Activated CD4-positive, alpha-beta memory T cell treated with anti-CD3 and anti-CD28 coated beads for 36 hours (primary cell): ENCODE measurements at regions of chr10 and their contacts with region 1.

Region 1: DNA sequence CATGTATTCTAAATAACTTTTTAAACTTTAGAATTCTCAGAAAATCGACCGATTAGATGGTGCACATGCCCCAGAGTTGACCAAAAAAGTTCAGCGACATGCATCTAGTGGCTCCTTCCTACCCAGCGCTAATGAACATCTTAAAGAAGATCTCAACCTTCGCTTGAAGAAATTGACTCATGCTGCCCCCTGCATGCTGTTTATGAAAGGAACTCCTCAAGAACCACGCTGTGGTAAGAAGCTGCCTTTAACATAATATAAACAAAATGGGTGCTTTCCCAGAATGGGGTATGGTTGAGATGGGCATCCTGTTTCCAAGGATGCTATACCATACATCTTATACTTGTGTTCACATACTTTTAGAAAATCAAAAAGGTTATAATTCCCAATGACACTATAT is 24.6 kb downstream of the GLRX3 start:
- DNase-seq: no peak
- H3K4me3 Mint-ChIP-seq: no peak overlapping the region
- H3K27ac Mint-ChIP-seq: no peak overlapping the region
- H3K4me1 Mint-ChIP-seq: peaks cover 26% of the 10 kb centered on the region
- H3K27me3 Mint-ChIP-seq: no peaks in the 10 kb centered on the region

Region 2: GRCh38 chr10:130036296-130037065 is 124.3 kb before region 1 on chr10:
- CTCF ChIA-PET with region 1: no interaction called
- POLR2A ChIA-PET with region 1: no interaction called
- intact Hi-C with region 1: no loop called
- DNase-seq: no peak
- H3K4me3 Mint-ChIP-seq: no peak overlapping the region
- H3K27ac Mint-ChIP-seq: no peak overlapping the region
- H3K4me1 Mint-ChIP-seq: no peaks in the 10 kb centered on the region
- H3K27me3 Mint-ChIP-seq: peaks cover 3% of the 10 kb centered on the region

Region 3: GRCh38 chr10:130074639-130075038 is 86.1 kb before region 1 on chr10:
- CTCF ChIA-PET with region 1: no interaction called
- POLR2A ChIA-PET with region 1: no interaction called
- intact Hi-C with region 1: no loop called
- DNase-seq: no peak
- H3K4me3 Mint-ChIP-seq: no peak overlapping the region
- H3K27ac Mint-ChIP-seq: no peak overlapping the region
- H3K4me1 Mint-ChIP-seq: no peaks in the 10 kb centered on the region
- H3K27me3 Mint-ChIP-seq: no peaks in the 10 kb centered on the region

Region 4: DNA sequence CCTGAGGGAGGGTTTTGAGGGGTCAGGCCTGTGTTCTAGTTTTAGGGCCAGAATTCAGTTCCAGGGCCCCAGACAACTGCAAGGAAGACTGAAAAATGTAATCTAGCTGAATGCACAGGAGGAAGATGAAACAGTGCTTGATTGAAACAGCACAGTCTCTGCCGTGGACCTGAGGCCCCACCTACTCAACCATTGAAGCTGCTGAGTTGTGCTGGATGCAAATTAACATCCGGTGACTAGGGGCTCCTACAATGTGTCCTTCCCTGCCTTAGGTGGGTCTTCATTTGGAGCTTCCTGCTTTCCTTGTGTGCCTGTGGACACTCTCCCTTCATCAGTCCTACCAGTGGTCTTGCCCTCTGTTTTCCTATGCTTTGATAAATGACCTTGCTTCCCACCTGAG is 18.9 kb before region 1 on chr10:
- CTCF ChIA-PET with region 1: no interaction called
- POLR2A ChIA-PET with region 1: no interaction called
- intact Hi-C with region 1: loop called (anchors 2 kb)
- DNase-seq: peak; percentile 47
- H3K4me3 Mint-ChIP-seq: no peak overlapping the region
- H3K27ac Mint-ChIP-seq: peak overlapping the region; percentile 77
- H3K4me1 Mint-ChIP-seq: peaks cover 61% of the 10 kb centered on the region
- H3K27me3 Mint-ChIP-seq: no peaks in the 10 kb centered on the region

Region 5: DNA sequence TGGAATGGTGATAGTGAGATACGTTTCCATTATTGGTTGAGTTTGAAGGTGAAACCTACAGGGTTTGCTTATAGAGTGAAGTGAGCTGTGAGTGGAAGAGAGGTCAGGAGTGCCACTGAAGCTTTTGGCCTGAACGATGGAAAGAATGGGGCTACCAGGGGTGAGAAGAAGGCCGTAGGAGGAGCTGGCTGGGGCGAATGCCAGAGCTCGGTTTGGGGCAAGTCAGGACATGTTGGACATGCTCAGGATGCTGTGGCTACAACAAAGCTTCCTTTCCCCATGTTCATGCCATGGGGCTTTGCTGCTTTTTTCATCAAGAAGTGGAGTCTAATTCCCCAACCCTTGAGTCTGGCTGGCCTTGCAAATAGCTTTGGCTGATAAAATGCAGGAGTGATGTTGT is 229.1 kb after region 1 on chr10:
- CTCF ChIA-PET with region 1: no interaction called
- POLR2A ChIA-PET with region 1: no interaction called
- intact Hi-C with region 1: no loop called
- DNase-seq: no peak
- H3K4me3 Mint-ChIP-seq: no peak overlapping the region
- H3K27ac Mint-ChIP-seq: no peak overlapping the region
- H3K4me1 Mint-ChIP-seq: no peaks in the 10 kb centered on the region
- H3K27me3 Mint-ChIP-seq: peaks cover 7% of the 10 kb centered on the region